A549 (cell line): ENCODE measurements at regions of chr15 and their contacts with region 1.

Region 1: DNA sequence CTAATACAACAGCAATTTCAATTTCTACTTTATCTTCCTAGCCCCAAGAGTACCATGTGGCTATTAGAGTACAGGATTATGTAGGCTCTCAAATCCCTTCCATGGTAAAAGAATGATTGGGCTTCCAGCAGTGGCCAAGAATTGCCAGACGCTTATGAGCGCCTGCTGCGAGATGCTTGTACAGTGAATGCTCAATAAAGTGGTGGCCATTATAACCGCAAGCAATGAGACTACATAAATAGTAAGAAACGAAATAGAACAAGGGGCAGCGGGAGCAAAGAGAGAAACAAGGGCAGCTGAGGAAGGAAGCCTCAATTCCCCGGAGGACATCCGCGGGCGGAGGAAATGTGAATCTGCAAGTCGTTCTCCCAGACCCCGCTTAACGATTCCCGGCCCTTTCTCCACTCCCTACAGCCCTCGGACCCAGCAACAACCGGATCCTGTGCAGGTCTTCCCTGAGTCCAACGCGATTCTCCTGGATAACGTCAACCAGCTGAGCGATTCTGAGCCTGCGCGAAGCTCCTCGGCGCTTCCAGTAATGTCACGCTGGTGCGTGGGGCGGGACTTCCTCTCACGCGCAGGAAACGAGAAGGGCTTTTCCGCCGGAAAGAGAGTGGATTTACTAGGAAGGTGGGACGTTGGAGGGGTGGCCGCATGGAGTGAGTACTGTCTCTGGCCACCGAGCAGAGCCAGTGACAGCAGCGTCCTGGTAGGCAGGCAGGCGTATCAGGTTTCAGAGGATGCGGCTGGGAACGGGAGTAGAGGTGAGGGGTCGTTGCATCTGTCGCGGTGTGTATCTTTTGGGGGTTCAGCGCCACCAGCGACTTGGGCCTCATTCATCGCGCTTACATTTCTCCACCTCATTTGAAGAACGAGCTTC is 40.5 kb upstream of the AP3B2 start:
- DNase-seq: peak; percentile 95 to 96
- ATAC-seq: peak; percentile 98 to 99
- H3K4me3 ChIP-seq: peak overlapping the region; percentile 75
- H3K27ac ChIP-seq: peak overlapping the region; percentile 85 to 88
- H3K4me1 ChIP-seq: peaks cover 19% of the 10 kb centered on the region; the same call in 2 of the 3 replicates
- CTCF ChIP-seq: no peak
- EP300 ChIP-seq: no peak
- POLR2A ChIP-seq: peak; percentile 93
- RAD21 ChIP-seq: no peak

Region 2: GRCh38 chr15:82540055-82540983 is 209.9 kb before region 1 on chr15 and contains the start of gene RPS17:
- CTCF ChIA-PET with region 1: interaction called, 5 read pairs
- POLR2A ChIA-PET with region 1: interaction called, 37 read pairs
- DNase-seq: peak; percentile 97 to 98
- ATAC-seq: peak; percentile 80 to 96
- H3K4me3 ChIP-seq: peak within 1 kb of the TSS; percentile 79
- H3K27ac ChIP-seq: peak within 1 kb of the TSS; percentile 89 to 94
- H3K4me1 ChIP-seq: peaks cover 28% of the 10 kb centered on the region
- CTCF ChIP-seq: peak; percentile 99
- EP300 ChIP-seq: peak in 1 of 2 experiments; percentile 48; a peak in 1 of 5 replicates
- POLR2A ChIP-seq: peak; percentile 90
- RAD21 ChIP-seq: peak in 1 of 2 experiments; percentile 64; a peak in 4 of 5 replicates
- polyA plus RNA-seq, gene RPS17: 5,298 and 6,127 TPM in 2 replicates

Region 3: GRCh38 chr15:82739086-82739485 is 11.1 kb before region 1 on chr15:
- CTCF ChIA-PET with region 1: no interaction called
- POLR2A ChIA-PET with region 1: interaction called, 10 read pairs
- DNase-seq: no peak
- ATAC-seq: no peak
- H3K4me3 ChIP-seq: no peak overlapping the region
- H3K27ac ChIP-seq: no peak overlapping the region
- H3K4me1 ChIP-seq: 0 out of 3 replicates have a peak, but pooled peaks cover 7% of the 10 kb centered on the region
- CTCF ChIP-seq: no peak
- EP300 ChIP-seq: no peak
- POLR2A ChIP-seq: no peak
- RAD21 ChIP-seq: no peak

Region 4: DNA sequence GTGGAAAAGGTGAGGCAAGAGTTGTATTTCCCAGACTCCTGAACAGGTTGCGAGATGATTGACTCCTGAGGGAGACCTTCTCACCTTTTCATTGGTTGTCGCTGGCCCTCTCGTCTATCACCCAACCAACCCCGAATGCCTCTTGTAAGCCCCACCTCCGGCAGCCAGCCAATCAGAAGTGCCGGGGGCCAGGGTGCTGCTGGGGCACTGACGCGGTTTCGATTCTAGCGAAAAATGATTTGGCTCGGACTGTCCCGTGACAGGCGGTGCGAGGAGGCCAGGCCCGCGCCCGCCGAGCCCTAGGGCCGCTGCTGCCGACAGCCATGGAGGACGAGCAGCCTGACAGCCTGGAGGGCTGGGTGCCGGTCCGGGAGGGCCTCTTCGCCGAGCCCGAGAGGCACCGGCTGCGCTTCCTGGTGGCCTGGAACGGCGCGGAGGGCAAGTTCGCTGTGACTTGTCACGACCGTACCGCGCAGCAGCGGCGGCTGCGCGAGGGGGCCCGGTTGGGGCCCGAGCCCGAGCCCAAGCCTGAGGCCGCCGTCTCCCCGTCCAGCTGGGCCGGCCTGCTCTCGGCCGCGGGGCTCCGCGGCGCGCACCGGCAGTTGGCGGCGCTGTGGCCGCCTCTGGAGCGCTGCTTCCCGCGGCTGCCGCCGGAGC is 59.3 kb after region 1 on chr15 and contains the start of gene WHAMM:
- CTCF ChIA-PET with region 1: interaction called, 3 read pairs
- POLR2A ChIA-PET with region 1: interaction called, 12 read pairs
- DNase-seq: peak; percentile 99
- ATAC-seq: peak; percentile 93 to 99
- H3K4me3 ChIP-seq: peak within 1 kb of the TSS; percentile 65
- H3K27ac ChIP-seq: peak within 1 kb of the TSS; percentile 80 to 96
- H3K4me1 ChIP-seq: peaks cover 17% of the 10 kb centered on the region
- CTCF ChIP-seq: peak; percentile 56
- EP300 ChIP-seq: no peak
- POLR2A ChIP-seq: peak; percentile 93
- RAD21 ChIP-seq: no peak
- polyA plus RNA-seq, gene WHAMM: 4.2 and 5.1 TPM in 2 replicates

Region 5: GRCh38 chr15:82999905-83000671 is 249.9 kb after region 1 on chr15:
- CTCF ChIA-PET with region 1: interaction called, 15 read pairs
- POLR2A ChIA-PET with region 1: interaction called, 3 read pairs
- DNase-seq: peak; percentile 54 to 69
- ATAC-seq: peak; percentile 87 to 88
- H3K4me3 ChIP-seq: peak overlapping the region; percentile 30; the same call in 2 of the 3 replicates
- H3K27ac ChIP-seq: peak overlapping the region; percentile 46 to 61; a peak in 4 of 6 replicates
- H3K4me1 ChIP-seq: peaks cover 4% of the 10 kb centered on the region; the same call in 1 of the 3 replicates
- CTCF ChIP-seq: peak; percentile 88
- EP300 ChIP-seq: no peak
- POLR2A ChIP-seq: no peak
- RAD21 ChIP-seq: peak; percentile 86 to 90